OCI-LY7 (cell line): ENCODE measurements at regions of chr4 and their contacts with region 1.

Region 1: DNA sequence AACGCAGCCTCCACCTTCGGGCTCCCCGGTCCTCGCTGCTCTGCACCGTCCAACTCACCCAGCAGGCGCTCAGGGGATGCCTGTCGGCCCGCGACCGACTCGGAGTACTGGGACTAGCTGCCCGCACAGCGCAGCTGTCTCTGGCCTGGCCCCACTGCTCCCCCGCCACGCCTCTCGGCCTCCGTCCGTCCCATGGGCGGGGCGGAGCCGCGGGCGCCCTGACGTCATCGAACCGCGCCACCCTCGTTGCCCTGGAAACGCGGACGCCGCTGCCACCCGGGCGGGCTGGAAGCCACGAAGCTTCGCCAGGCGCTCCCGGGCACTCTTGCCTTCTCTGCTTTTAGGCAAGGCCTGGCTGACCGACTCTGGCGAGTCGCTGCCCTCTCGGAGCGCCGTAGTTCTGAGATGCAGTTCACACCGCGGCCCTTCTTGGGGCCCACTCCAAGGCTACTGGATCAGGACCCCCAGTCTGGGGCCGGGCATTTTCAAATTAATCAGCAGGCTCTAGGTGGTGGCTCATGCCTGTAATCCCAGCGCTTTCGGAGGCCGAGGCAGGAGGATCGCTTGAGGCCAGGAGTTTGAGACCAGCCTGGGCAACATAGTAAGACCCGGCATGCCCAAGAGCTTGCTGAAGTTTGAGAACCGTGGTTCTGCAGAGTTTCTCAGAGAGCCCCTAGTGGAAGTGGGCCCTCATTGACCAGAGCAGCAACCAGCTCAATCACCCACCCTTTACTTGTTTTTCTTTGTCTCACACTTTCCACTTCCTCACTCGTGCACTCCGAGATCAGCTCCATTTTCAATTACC is 12.0 kb downstream of the ACOX3 start:
- DNase-seq: peak; percentile 88
- H3K4me3 ChIP-seq: peak overlapping the region; percentile 76
- H3K27ac ChIP-seq: no peak overlapping the region
- H3K4me1 ChIP-seq: peaks cover 11% of the 10 kb centered on the region
- CTCF ChIP-seq: peak; percentile 70

Region 2: GRCh38 chr4:7360806-7361205 is 1067.7 kb before region 1 on chr4:
- CTCF ChIA-PET with region 1: no interaction called
- POLR2A ChIA-PET with region 1: interaction called, 10 read pairs
- intact Hi-C with region 1: no loop called
- DNase-seq: no peak
- H3K4me3 ChIP-seq: no peak overlapping the region
- H3K27ac ChIP-seq: no peak overlapping the region
- H3K4me1 ChIP-seq: no peaks in the 10 kb centered on the region
- CTCF ChIP-seq: no peak

Region 3: DNA sequence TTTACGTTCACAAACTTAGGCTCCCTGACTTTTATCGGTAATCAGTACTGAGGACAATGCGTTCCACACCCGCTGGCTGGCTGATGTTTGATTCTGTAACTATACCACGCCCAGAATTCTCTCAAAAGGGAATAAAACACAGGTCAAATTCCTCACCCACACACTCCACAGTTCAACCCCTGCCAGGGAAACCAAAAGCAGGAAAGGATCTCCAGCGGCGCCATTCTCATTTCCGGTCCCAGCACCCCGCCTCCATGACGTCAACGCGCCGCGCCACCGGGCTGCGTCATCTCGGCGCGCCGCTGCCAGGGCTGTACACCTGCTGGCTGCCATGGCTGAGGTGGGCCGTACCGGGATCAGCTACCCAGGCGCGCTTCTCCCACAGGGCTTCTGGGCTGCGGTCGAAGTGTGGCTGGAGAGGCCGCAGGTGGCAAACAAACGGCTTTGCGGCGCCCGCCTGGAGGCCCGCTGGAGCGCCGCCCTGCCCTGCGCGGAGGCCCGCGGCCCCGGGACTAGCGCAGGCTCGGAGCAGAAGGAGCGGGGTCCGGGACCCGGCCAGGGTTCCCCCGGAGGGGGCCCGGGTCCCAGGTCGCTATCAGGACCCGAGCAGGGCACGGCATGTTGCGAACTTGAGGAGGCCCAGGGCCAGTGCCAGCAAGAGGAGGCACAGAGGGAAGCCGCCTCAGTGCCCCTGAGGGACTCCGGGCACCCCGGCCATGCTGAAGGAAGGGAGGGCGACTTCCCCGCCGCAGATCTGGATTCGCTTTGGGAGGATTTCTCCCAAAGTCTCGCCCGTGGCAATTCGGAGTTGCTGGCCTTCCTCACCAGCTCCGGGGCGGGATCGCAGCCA is 12.2 kb after region 1 on chr4 and contains the starts of genes ACOX3 and TRMT44:
- CTCF ChIA-PET with region 1: interaction called, 3 read pairs
- POLR2A ChIA-PET with region 1: interaction called, 6 read pairs
- intact Hi-C with region 1: loop called (anchors 1 kb)
- DNase-seq: peak; percentile 87
- H3K4me3 ChIP-seq: peak within 1 kb of the TSS; percentile 98
- H3K27ac ChIP-seq: peak within 1 kb of the TSS; percentile 87
- H3K4me1 ChIP-seq: peaks cover 54% of the 10 kb centered on the region
- CTCF ChIP-seq: no peak
- total RNA-seq, gene ACOX3: 10.4 and 12.7 TPM in 2 replicates
- total RNA-seq, gene TRMT44: 23.0 and 26.6 TPM in 2 replicates